ENCODE measurements at regions of chr16 and their contacts with region 1.

Region 1: GRCh38 chr16:87492721-87493607 is at the start of gene ZCCHC14:
- DNase-seq: peak; percentile 100
- ATAC-seq: peak; percentile 99
- total RNA-seq, gene ZCCHC14: 14.4 TPM

Region 2: DNA sequence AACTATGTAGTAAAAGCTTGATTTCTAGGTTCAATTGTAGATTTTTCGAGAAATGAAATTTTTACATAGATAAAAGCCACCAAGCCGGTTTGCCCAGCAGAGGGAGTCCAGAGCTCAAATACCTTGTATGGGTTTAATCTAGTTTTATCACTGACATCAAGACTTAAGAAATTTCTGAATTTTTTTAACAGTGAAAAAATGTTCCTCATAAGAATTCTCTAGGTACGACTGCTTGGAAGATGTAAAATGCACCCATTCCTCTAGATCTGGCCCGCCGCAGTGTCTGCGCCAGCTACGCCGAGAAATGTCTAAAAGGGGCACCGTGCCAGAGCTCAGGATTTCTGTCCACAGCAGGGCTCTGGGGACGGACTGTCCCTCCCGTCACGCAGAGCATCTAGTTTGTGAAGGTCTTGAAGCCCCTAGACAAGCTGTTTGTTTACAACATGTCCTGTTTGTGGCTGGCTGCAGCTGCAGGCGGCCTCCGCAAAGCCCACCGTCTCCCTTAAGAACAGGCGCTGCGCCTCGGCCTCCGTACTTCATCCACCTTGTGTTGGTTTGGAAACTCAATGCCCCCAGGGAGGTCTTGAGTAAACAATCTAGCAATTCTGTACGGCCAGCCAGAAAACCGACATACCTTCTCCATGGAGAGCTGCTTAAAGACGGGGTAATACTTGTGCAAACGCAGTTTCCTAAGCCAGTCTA is 76.0 kb before region 1 on chr16:
- intact Hi-C with region 1: no loop called
- DNase-seq: peak; percentile 68
- ATAC-seq: no peak

Region 3: DNA sequence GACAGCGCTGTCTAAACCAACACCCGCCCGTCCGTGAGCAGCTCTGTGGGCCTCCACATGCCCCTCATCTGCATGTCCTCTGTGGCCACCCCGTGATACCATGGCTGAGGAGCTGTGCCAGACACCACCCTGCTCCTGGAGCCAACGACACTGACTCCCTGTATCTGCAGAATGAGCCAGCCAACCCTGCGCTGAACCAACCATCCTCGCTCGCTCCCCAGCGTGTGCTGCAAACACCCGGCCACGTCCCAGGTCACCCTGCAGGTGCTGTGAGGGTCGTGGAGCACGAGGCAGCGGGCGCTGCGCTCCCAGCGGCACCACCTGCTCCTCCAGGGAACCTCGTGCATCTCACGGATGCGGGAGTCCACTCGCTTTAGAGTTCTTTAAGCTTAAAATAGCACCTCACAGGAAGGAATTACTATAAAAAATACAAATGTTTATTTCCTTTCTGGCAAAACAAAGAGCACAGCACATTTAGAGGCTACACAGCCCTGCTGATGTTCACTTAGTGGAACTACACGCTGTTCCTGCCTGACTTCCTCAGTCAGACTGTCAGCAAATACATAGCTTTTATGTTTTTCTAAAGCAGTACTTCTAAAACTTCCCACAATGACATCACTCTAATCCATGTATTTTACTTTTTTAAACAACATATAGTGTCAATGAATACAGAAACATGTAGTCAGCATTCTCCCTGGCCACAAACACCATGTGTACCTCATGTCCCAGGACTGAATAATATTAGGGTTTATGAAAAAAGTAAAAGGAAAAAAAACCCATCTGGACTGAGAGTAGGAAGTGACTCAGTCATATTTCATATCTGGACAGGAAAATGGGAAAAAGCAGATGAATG is 57.4 kb before region 1 on chr16:
- intact Hi-C with region 1: loop called (anchors 10 kb)
- DNase-seq: no peak
- ATAC-seq: peak; percentile 21

Region 4: DNA sequence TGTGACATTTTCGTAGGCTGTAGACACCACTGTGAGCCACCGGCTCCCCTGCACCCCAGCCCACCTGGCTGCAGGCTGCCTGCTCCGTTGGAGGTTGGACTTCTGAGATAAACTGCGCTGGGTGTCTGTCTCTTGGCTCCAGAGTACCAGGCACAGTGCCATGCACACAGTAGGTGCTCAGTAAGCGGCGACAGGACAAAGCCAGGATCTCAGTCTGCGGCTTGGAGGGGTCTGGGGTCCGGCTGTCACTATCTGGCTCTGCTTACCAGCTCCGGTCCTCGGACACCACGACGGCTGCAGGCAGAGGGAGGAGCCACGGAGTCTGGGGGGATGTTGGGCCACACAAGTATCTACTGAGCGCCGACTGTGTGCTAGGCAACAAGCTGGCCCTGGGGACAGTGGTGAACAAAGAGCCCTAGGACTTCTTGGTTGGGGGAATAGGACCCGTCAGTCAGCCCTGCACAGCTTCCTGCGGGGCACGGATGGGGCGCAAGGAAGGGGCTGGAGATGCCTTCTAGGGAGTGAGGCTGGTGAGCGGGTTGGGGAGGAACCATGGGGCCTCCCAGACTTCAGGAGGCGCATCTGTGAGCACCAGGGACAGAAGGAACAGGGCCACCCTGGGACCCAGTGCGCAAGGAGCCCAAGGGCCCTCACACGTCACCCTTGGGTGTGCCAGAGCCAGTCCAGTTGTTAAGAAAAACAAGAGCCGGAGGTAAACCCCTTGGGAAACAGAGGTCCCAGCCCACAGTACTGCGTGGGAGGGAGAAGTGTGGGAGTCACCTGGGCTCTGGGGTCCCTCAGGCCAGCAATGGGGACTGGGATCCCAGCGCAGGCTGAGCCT is 126.6 kb after region 1 on chr16:
- intact Hi-C with region 1: no loop called
- DNase-seq: peak; percentile 28
- ATAC-seq: no peak

Region 5: GRCh38 chr16:87678618-87679017 is 185.7 kb after region 1 on chr16:
- intact Hi-C with region 1: no loop called
- DNase-seq: no peak
- ATAC-seq: no peak